K562 (cell line): ENCODE measurements at regions of chr1 and their contacts with region 1.

Region 1: GRCh38 chr1:90721210-90722194 is 4.4 kb upstream of the BARHL2 start:
- DNase-seq: peak; percentile 65 to 83 (median 70)
- ATAC-seq: peak; percentile 87
- H3K4me3 ChIP-seq: no peak overlapping the region
- H3K27ac ChIP-seq: no peak overlapping the region
- H3K4me1 ChIP-seq: peaks cover 0 to 32% of the 10 kb centered on the region in 2 experiments; a peak in 3 of 5 replicates
- H3K27me3 ChIP-seq: peaks cover 6 to 7% of the 10 kb centered on the region in 2 experiments; a peak in 3 of 5 replicates
- CTCF ChIP-seq: peak; percentile 82 to 94 (median 93)
- EP300 ChIP-seq: no peak
- POLR2A ChIP-seq: no peak
- RAD21 ChIP-seq: peak; percentile 89

Region 2: GRCh38 chr1:90809996-90810395 is 88.5 kb after region 1 on chr1:
- CTCF ChIA-PET with region 1: no interaction called
- POLR2A ChIA-PET with region 1: no interaction called
- in situ Hi-C with region 1: no loop called
- intact Hi-C with region 1: loop called (anchors 5 kb)
- DNase-seq: no peak
- ATAC-seq: no peak
- H3K4me3 ChIP-seq: no peak overlapping the region
- H3K27ac ChIP-seq: no peak overlapping the region
- H3K4me1 ChIP-seq: peaks cover 13 to 27% of the 10 kb centered on the region in 2 experiments; a peak in 4 of 5 replicates
- H3K27me3 ChIP-seq: no peaks in the 10 kb centered on the region
- CTCF ChIP-seq: no peak
- EP300 ChIP-seq: no peak
- POLR2A ChIP-seq: no peak
- RAD21 ChIP-seq: no peak

Region 3: DNA sequence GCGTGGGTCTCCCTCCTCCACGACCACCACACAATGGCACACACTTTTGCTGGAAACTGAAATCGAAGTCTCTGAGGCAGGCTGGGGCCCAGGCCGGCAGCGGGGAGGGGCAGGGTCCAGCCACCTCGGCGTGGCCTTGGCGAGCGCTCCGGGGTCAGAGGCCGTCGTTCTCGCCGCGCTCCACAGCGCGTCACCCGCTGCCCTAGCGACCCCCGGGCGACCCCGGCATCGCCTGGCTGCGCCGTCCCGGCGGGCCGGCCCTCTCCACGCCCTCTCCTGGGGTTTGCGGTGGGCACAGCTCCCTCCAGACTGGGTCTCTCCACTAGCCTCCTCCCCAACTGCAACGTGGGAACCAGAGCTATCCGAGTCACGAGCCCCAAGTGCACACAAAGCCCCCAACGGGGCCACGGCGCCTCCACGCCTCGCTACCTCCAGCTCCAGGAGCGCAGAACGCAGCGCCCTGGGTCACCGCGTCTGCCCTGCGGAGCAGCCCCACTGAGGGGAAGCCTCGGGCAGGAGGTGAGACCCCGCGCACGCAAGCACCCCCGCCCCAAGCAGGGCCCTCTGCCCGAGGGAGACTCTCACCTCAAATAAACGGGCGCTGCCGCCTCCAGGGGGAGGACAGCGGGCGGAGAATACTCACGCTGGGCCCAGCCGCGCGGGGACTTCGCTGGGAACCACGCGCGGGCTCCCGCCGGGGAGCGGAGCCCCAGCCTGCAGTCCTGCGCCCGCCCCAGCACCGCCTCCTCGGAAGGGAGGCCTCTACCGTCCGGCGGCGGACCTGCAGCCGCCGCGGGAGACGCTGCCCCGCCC is 129.6 kb after region 1 on chr1:
- CTCF ChIA-PET with region 1: no interaction called
- POLR2A ChIA-PET with region 1: interaction called, 3 read pairs
- in situ Hi-C with region 1: no loop called
- intact Hi-C with region 1: loop called (anchors 2 kb)
- DNase-seq: peak; percentile 90 to 94 (median 91)
- ATAC-seq: peak; percentile 97
- H3K4me3 ChIP-seq: peak overlapping the region; percentile 84
- H3K27ac ChIP-seq: peak overlapping the region; percentile 90
- H3K4me1 ChIP-seq: peaks cover 5 to 10% of the 10 kb centered on the region in 2 experiments; a peak in 3 of 5 replicates
- H3K27me3 ChIP-seq: no peaks in the 10 kb centered on the region
- CTCF ChIP-seq: peak; percentile 41 to 83 (median 63); a peak in 5 of 6 replicates
- EP300 ChIP-seq: no peak
- POLR2A ChIP-seq: peak; percentile 83
- RAD21 ChIP-seq: peak in 1 of 2 experiments; percentile 39; a peak in 2 of 4 replicates

Region 4: DNA sequence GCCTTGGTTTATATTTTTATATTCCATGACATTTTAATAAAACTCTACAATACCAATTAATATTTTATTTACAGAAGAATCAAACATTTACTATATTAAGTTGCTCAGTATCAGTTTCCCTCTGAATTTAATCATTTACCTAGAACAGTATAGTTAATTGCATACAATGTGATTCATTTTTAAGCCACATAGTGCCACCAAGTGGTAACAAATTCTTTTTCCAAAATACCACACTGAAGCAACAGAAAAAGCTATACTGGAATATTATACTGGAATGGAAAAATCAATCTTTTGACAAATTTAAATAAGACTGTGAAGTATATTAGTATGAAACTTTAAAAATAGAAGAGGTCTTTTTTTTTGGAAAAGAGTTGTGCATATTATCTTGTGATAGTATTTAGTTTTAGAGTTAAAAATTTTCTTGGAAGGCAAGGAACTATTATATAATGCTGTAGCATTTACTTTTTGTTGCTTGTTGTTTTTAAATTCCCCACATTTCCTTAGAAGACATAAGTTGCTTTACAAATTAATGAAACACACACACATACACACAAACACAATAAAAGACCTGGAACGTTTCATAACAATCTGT is 243.0 kb after region 1 on chr1:
- CTCF ChIA-PET with region 1: interaction called, 19 read pairs
- POLR2A ChIA-PET with region 1: no interaction called
- in situ Hi-C with region 1: loop called (anchors 10 kb)
- intact Hi-C with region 1: loop called (anchors 1 kb)
- DNase-seq: peak in 1 of 4 experiments; percentile 39
- ATAC-seq: peak; percentile 85
- H3K4me3 ChIP-seq: no peak overlapping the region
- H3K27ac ChIP-seq: no peak overlapping the region
- H3K4me1 ChIP-seq: no peaks in the 10 kb centered on the region
- H3K27me3 ChIP-seq: no peaks in the 10 kb centered on the region
- CTCF ChIP-seq: peak in 2 of 3 experiments; percentile 32 to 64; a peak in 3 of 6 replicates
- EP300 ChIP-seq: no peak
- POLR2A ChIP-seq: no peak
- RAD21 ChIP-seq: peak; percentile 75 to 79